BJ (cell line): ENCODE measurements at regions of chr18 and their contacts with region 1.

Region 1: GRCh38 chr18:6920099-6920899 is 190.8 kb downstream of the ARHGAP28 start:
- DNase-seq: peak; percentile 11
- H3K4me3 ChIP-seq: no peak overlapping the region
- H3K27me3 ChIP-seq: no peaks in the 10 kb centered on the region
- CTCF ChIP-seq: peak; percentile 87

Region 2: GRCh38 chr18:6934859-6935258 is 14.6 kb after region 1 on chr18:
- CTCF ChIA-PET with region 1: interaction called, 20 read pairs
- POLR2A ChIA-PET with region 1: no interaction called
- DNase-seq: no peak
- H3K4me3 ChIP-seq: no peak overlapping the region
- H3K27me3 ChIP-seq: no peaks in the 10 kb centered on the region
- CTCF ChIP-seq: no peak

Region 3: DNA sequence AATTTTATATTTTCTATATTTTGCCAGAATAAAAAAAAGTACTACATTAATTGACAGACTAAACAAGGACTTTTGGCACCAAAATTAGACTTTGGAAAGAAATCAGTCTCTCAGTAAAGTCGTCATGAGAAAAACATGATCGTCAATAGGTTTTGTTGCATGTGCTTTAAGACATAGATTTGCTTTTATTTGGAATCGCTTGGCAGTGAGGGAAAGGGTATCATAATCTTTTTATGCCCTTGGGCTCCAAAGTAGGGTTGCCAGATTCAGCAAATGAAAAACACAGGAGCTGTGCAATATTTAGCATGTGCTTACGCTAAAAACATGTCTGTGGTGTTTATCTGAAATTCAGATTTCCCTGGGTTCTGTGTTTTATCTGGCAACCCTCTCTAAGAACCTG is 19.7 kb after region 1 on chr18:
- CTCF ChIA-PET with region 1: interaction called, 20 read pairs
- POLR2A ChIA-PET with region 1: no interaction called
- DNase-seq: no peak
- H3K4me3 ChIP-seq: no peak overlapping the region
- H3K27me3 ChIP-seq: no peaks in the 10 kb centered on the region
- CTCF ChIP-seq: no peak

Region 4: GRCh38 chr18:7000484-7001096 is 80.3 kb after region 1 on chr18:
- CTCF ChIA-PET with region 1: interaction called, 93 read pairs
- POLR2A ChIA-PET with region 1: no interaction called
- DNase-seq: no peak
- H3K4me3 ChIP-seq: no peak overlapping the region
- H3K27me3 ChIP-seq: no peaks in the 10 kb centered on the region
- CTCF ChIP-seq: peak; percentile 73

Region 5: DNA sequence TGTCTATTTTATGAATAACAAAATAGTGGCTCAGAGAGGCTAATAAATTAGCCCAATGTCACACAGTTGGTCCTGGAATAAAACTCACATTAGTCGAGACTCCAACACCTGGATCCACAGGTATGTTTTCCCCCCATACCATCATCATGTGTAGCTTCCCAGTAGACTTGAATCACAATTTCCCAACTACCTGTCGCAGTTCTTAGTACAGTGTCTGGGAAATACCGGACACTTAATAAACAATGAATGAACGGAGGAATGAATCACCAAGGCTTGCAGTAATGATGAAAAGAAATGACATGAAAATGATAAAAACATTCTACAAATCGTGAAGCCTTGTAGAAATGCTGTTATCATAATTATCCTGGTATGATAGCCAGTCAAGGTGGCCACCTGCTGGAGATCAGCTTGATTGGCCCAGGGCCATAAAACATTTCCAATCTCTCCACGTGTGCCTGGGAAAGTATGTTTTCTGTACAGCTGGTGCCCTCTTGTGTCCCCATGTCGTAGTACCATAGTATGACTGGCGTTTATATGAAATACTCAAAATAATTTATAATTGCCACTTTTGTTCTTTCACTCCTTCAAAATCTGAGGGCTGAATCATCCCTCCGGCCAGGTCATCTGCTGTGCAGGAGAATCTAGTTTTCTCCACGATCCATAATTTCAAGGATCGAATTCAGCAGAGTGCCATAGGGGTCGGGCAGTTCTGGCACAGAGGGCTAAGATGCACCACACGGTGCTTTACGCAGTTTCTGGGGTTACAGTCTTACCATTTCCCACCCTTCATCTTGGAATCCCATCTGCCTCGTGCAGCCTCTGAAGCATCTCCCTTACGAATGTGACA is 101.9 kb after region 1 on chr18:
- CTCF ChIA-PET with region 1: interaction called, 18 read pairs
- POLR2A ChIA-PET with region 1: no interaction called
- DNase-seq: no peak
- H3K4me3 ChIP-seq: no peak overlapping the region
- H3K27me3 ChIP-seq: no peaks in the 10 kb centered on the region
- CTCF ChIP-seq: peak; percentile 36

Region 6: GRCh38 chr18:7177116-7177744 is 256.9 kb after region 1 on chr18:
- CTCF ChIA-PET with region 1: interaction called, 72 read pairs
- POLR2A ChIA-PET with region 1: interaction called, 4 read pairs
- DNase-seq: peak; percentile 24
- H3K4me3 ChIP-seq: no peak overlapping the region
- H3K27me3 ChIP-seq: no peaks in the 10 kb centered on the region
- CTCF ChIP-seq: peak; percentile 81